ENCODE measurements at regions of chr2 and their contacts with region 1.

Region 1: DNA sequence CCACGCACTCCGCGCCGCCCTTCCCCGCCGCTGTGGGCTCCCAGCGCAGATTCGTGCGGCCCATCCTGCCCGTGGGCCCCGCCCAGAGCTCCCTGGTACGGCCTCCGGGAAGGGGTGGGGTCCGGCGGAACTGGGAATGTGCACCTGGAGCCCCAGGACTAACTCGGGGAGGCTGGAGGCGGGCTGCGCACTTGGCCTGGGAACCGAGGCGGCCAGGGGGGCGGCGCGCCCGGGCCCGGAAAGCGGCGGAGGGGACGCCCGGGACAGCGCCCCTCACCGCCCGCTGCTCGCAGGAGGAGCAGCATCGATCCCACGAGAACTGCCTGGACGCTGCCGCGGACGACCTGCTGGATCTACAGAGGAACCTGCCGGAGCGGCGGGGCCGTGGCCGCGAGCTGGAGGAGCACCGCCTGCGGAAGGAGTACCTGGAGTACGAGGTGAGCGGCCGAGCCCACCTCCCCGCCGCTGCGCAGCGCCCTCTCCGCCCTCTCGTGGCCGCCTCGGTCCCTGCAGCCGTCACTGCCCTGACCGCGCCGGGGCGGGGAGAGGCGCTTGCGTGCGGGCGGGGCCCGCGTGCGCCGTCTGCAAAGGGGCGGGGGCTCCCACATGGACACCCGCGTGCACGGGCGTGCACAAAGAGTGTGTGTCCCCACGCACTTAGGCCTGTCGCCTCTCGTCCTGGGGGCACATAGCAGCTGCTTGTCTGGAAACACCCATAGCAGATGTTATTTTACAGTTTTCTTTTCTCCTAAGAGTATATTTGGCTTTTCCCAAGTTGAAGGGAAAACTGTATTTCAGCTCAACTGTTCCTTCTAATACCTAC is 25.2 kb downstream of the PSD4 start:
- DNase-seq: peak; percentile 90 to 97
- H3K4me3 ChIP-seq: peak overlapping the region; percentile 62
- H3K4me3 Mint-ChIP-seq: peak overlapping the region; percentile 81
- H3K27ac Mint-ChIP-seq: peak overlapping the region; percentile 83
- H3K4me1 ChIP-seq: peaks cover 16% of the 10 kb centered on the region
- H3K4me1 Mint-ChIP-seq: peaks cover 1% of the 10 kb centered on the region
- H3K27me3 ChIP-seq: no peaks in the 10 kb centered on the region
- H3K27me3 Mint-ChIP-seq: no peaks in the 10 kb centered on the region
- CTCF ChIP-seq: peak; percentile 89 to 92

Region 2: GRCh38 chr2:113157118-113157896 is 41.7 kb before region 1 on chr2:
- CTCF ChIA-PET with region 1: interaction called, 27 read pairs
- POLR2A ChIA-PET with region 1: interaction called, 5 read pairs
- intact Hi-C with region 1: loop called (anchors 1 kb)
- DNase-seq: peak; percentile 87 to 88
- H3K4me3 ChIP-seq: peak overlapping the region; percentile 80
- H3K4me3 Mint-ChIP-seq: peak overlapping the region; percentile 75
- H3K27ac Mint-ChIP-seq: peak overlapping the region; percentile 33
- H3K4me1 ChIP-seq: peaks cover 22% of the 10 kb centered on the region
- H3K4me1 Mint-ChIP-seq: peaks cover 5% of the 10 kb centered on the region
- H3K27me3 ChIP-seq: no peaks in the 10 kb centered on the region
- H3K27me3 Mint-ChIP-seq: no peaks in the 10 kb centered on the region
- CTCF ChIP-seq: no peak

Region 3: GRCh38 chr2:113181258-113182051 is 17.5 kb before region 1 on chr2:
- CTCF ChIA-PET with region 1: interaction called, 37 read pairs
- POLR2A ChIA-PET with region 1: interaction called, 3 read pairs
- intact Hi-C with region 1: loop called (anchors 2 kb)
- DNase-seq: no peak
- H3K4me3 ChIP-seq: no peak overlapping the region
- H3K4me3 Mint-ChIP-seq: no peak overlapping the region
- H3K27ac Mint-ChIP-seq: no peak overlapping the region
- H3K4me1 ChIP-seq: peaks cover 31% of the 10 kb centered on the region
- H3K4me1 Mint-ChIP-seq: peaks cover 10% of the 10 kb centered on the region
- H3K27me3 ChIP-seq: no peaks in the 10 kb centered on the region; the same call in 1 of the 2 replicates
- H3K27me3 Mint-ChIP-seq: no peaks in the 10 kb centered on the region
- CTCF ChIP-seq: no peak

Region 4: DNA sequence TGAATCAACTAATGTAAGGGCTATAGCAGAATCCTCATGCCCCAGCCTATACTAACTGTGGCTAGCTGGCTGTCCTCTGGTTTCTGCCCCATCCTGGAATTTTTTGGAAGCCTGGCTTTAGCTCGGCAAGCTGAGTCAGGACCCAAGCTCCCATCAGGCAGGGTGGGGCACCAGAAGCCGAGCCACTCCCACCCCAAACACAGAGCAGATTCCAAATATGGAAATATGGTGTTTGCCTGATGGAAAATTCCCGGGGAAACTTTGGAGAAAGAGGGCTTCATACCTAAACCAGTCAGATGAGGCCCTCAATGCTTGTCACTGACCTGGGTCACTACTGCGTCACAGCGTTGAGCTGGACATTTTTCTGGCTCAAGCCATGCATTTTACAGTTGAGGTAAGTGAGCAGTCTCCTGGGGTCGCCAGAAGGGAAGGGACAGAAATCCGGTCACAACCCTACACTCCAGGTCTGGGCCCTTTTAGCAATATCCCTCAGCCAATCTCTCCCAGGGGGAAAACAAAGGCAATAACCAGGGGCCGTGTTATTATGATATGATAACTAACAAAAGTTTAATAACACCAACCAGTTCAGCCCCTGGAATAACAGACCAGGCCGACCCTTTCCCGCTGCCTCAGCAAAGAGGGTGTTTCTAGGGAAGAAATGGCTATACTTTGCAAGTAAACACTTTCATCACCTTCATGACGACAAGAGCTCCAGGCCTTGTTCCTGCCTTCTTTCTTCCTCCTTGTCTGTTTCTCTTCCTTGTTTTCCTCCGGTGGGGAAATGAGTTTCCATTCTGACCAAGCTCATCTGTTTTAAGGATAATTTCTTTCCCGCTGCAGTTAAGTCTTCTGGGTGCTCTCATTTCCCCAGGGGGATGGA is 12.5 kb after region 1 on chr2:
- CTCF ChIA-PET with region 1: interaction called, 31 read pairs
- POLR2A ChIA-PET with region 1: interaction called, 5 read pairs
- intact Hi-C with region 1: no loop called
- DNase-seq: peak; percentile 69 to 71
- H3K4me3 ChIP-seq: no peak overlapping the region
- H3K4me3 Mint-ChIP-seq: peak overlapping the region; percentile 0
- H3K27ac Mint-ChIP-seq: peak overlapping the region; percentile 68
- H3K4me1 ChIP-seq: peaks cover 27% of the 10 kb centered on the region
- H3K4me1 Mint-ChIP-seq: peaks cover 67% of the 10 kb centered on the region
- H3K27me3 ChIP-seq: no peaks in the 10 kb centered on the region
- H3K27me3 Mint-ChIP-seq: no peaks in the 10 kb centered on the region
- CTCF ChIP-seq: no peak

Region 5: DNA sequence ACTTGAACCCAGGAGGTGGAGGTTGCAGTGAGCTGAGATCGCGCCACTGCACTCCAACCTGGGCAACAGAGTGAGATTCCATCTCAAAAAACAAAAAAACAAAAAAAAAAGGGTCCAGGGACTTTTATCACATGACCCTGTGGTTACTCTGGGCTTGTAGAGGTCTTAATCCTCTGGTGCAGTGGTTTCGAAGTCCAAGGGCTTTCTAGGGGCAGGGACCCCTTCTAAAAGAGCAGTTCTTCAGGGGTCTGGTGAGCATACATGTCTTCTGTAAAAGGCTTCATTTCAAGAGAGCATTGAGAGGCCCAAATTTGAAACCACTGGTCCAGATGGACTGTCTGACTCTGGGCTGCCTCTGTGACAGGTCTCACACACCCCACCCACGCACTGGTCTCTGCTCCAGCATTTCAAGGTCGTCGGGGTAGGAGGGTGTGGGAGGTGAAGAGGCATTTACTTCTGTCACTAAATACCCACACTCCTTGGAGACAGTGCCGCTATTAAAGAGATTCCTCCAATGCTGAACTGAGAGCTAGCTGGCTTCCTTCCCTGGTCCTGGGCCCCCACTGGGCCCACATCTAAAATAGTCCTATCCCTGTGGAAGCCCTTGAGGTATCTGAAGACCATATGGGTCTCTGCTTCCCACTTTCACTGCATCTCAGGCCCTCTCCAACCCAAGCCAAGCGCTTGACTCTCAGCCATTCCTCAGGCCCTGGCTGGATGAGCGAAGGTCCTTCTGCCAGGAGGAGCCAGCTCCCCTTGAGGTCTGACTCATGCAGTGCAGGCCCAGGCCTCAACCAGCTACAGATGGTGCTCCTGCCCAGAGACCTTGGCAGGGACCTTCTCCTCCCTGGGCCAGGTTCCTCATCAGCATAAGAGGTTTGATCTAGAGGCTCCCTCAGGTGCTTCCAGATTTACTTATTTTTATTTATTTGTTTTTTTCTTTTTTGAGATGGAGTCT is 34.9 kb after region 1 on chr2:
- CTCF ChIA-PET with region 1: interaction called, 70 read pairs
- POLR2A ChIA-PET with region 1: interaction called, 17 read pairs
- intact Hi-C with region 1: loop called (anchors 1 kb)
- DNase-seq: peak; percentile 45 to 68
- H3K4me3 ChIP-seq: no peak overlapping the region
- H3K4me3 Mint-ChIP-seq: peak overlapping the region; percentile 95
- H3K27ac Mint-ChIP-seq: peak overlapping the region; percentile 97
- H3K4me1 ChIP-seq: peaks cover 76% of the 10 kb centered on the region
- H3K4me1 Mint-ChIP-seq: peaks cover 54% of the 10 kb centered on the region
- H3K27me3 ChIP-seq: no peaks in the 10 kb centered on the region
- H3K27me3 Mint-ChIP-seq: no peaks in the 10 kb centered on the region
- CTCF ChIP-seq: peak; percentile 40 to 42